Calu3 (cell line): ENCODE measurements at regions of chr11 and their contacts with region 1.

Region 1: DNA sequence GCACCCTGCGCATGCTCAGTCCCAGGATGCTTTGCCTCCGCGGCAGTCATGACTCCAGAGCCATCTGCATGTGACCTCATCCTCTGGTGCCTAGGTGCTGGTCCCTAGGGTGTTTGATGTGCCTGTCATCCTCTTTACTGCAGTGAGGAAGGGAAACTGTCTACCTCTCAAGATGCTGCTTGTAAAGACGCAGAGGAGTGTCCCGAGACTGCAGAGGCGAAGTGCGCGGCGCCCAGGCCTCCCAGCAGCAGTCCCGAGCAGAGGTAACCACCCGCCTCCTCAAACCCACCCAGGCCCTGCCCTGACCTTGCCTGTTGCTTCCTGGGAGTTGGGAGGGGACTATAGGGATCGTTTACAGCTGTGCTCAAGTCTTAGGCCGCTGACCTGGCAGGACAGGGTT is 74.6 kb upstream of the GAL start:
- DNase-seq: no peak
- H3K4me3 Mint-ChIP-seq: no peak overlapping the region
- H3K27ac Mint-ChIP-seq: no peak overlapping the region
- H3K4me1 Mint-ChIP-seq: no peaks in the 10 kb centered on the region
- H3K27me3 Mint-ChIP-seq: no peaks in the 10 kb centered on the region
- CTCF ChIP-seq: no peak

Region 2: DNA sequence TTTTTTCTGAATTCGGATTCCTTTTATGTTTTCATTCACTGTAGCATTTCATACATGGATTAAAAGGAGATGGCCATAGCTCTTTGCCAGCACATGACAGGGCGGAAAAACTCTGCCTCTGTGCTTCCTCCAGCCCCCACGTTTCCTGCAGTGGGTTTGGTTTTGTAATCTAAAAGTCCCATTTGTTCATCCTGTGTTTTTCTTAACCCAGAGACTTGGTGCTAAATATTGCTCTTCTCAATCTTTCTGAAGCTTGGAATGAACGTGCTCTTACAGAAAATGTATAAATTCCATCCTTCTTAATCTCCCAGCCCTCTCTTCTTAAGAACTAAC is 59.3 kb before region 1 on chr11:
- CTCF ChIA-PET with region 1: no interaction called
- intact Hi-C with region 1: loop called (anchors 5 kb)
- DNase-seq: no peak
- H3K4me3 Mint-ChIP-seq: no peak overlapping the region
- H3K27ac Mint-ChIP-seq: no peak overlapping the region
- H3K4me1 Mint-ChIP-seq: peaks cover 26% of the 10 kb centered on the region
- H3K27me3 Mint-ChIP-seq: no peaks in the 10 kb centered on the region
- CTCF ChIP-seq: no peak